Body of pancreas (tissue), 4 donors: ENCODE measurements at regions of chr12 and their contacts with region 1.

Region 1: DNA sequence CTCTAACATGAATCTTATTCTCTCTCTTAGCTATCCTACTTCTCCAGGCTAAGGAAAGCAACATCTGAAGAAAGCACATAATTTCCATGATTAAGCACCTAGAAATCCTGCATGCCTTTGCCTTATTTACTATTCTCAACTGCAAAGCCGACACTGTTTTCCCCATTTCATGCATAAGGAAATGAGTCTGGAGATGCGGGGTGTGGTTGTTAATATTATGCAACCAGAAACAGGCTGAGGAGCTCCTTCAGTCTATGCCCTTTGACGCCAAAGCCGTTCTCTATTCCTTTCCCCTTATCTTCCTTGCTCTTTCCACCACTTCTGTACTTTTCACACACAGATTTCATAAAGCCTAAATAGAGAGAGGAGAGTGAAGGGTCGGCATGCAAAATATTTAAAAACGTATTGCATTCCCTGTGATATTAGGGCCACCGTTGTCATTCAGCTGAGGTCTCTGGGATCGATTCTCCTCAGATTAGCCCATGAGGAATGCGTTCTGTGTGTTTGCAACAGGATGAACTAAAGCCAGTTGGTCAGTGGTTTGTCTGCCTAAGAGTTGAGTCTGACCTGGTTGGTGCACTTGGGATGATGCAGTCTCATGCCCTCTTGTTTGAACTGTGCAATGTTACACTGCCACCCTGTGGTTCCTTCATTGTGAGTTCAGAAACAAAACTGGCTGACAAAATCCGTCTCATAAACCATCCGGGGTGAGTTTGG is 53.1 kb upstream of the PLEKHG7 start:
- DNase-seq: peak; percentile 64 to 77 (median 65)
- ATAC-seq: peak; percentile 87
- H3K4me3 ChIP-seq: no peak overlapping the region
- H3K27ac ChIP-seq: no peak overlapping the region
- H3K4me1 ChIP-seq: no peaks in the 10 kb centered on the region
- H3K27me3 ChIP-seq: no peaks in the 10 kb centered on the region
- CTCF ChIP-seq: peak; percentile 55 to 87 (median 81)
- POLR2A ChIP-seq: no peak

Region 2: GRCh38 chr12:91370086-91370868 is 1279.4 kb before region 1 on chr12:
- intact Hi-C with region 1: loop called (anchors 10 kb)
- DNase-seq: no peak
- ATAC-seq: no peak
- H3K4me3 ChIP-seq: no peak overlapping the region
- H3K27ac ChIP-seq: no peak overlapping the region
- H3K4me1 ChIP-seq: no peaks in the 10 kb centered on the region
- H3K27me3 ChIP-seq: peaks cover 0 to 3% of the 10 kb centered on the region in 2 donors
- CTCF ChIP-seq: no peak
- POLR2A ChIP-seq: no peak